ENCODE measurements at regions of chr5 and their contacts with region 1.

Region 1: GRCh38 chr5:135185481-135186065 is 151.5 kb upstream of the PITX1 start:
- DNase-seq: no peak
- H3K4me3 ChIP-seq: no peak overlapping the region
- CTCF ChIP-seq: no peak
- POLR2A ChIP-seq: no peak

Region 2: DNA sequence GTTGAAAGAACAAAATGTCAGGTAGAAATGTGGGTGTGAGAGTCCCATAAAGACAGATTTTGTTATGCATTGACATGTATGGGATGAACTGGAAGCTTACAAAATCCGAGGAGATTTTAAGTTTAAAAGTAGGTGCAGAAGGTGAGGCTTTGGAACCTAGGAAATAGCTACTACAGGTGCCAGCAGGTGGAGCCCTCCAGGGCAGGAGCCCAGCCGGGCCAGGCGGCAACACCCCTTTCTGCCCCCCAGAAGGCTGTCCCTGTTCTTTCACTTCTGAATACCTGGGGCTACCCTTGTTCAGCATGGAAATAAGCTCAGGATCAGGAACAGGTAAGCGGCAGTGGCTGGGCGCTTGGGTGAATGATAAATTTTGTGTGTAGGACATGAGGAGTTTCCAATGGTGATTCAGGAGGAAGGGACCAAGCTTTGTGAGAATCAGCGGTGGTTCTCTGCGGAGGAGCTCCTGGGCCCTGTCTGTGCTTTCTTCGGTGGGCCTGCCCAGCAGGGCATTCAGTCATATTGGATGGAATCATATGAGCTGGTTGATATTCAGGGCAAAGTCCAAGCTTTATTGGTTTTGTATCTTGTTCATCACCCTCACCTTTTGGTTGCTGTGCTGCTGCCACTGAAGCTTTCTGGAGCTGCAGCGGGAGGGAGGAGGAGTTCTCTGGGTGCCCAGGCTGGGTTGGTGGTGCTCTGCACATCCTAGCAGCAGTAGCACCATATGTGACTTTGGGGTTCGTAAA is 268.3 kb before region 1 on chr5:
- intact Hi-C with region 1: loop called (anchors 10 kb)
- DNase-seq: no peak
- H3K4me3 ChIP-seq: no peak overlapping the region
- CTCF ChIP-seq: no peak
- POLR2A ChIP-seq: no peak